Prostate gland (tissue), 2 donors: ENCODE measurements at regions of chr3 and their contacts with region 1.

Region 1: GRCh38 chr3:45509768-45510129 is 84.8 kb upstream of the LIMD1 start:
- DNase-seq: no peak
- H3K4me3 ChIP-seq: no peak overlapping the region
- H3K27ac ChIP-seq: no peak overlapping the region
- H3K4me1 ChIP-seq: no peaks in the 10 kb centered on the region
- H3K27me3 ChIP-seq: no peaks in the 10 kb centered on the region
- CTCF ChIP-seq: no peak
- POLR2A ChIP-seq: no peak

Region 2: GRCh38 chr3:45218578-45219390 is 291.0 kb before region 1 on chr3:
- intact Hi-C with region 1: no loop called
- DNase-seq: no peak
- H3K4me3 ChIP-seq: no peak overlapping the region
- H3K27ac ChIP-seq: no peak overlapping the region
- H3K4me1 ChIP-seq: no peaks in the 10 kb centered on the region
- H3K27me3 ChIP-seq: no peaks in the 10 kb centered on the region
- CTCF ChIP-seq: no peak
- POLR2A ChIP-seq: no peak

Region 3: GRCh38 chr3:45275006-45275704 is 234.6 kb before region 1 on chr3:
- intact Hi-C with region 1: no loop called
- DNase-seq: no peak
- H3K4me3 ChIP-seq: no peak overlapping the region
- H3K27ac ChIP-seq: no peak overlapping the region
- H3K4me1 ChIP-seq: no peaks in the 10 kb centered on the region
- H3K27me3 ChIP-seq: no peaks in the 10 kb centered on the region
- CTCF ChIP-seq: no peak
- POLR2A ChIP-seq: no peak

Region 4: GRCh38 chr3:45593708-45594609 is 84.2 kb after region 1 on chr3:
- intact Hi-C with region 1: loop called (anchors 5 kb)
- DNase-seq: peak; percentile 69
- H3K4me3 ChIP-seq: peak overlapping the region; percentile 61 to 73
- H3K27ac ChIP-seq: peak overlapping the region; percentile 83 to 88
- H3K4me1 ChIP-seq: peaks cover 23% of the 10 kb centered on the region
- H3K27me3 ChIP-seq: no peaks in the 10 kb centered on the region
- CTCF ChIP-seq: no peak
- POLR2A ChIP-seq: peak; percentile 66